Breast epithelium (tissue), 4 donors: ENCODE measurements at regions of chr3 and their contacts with region 1.

Region 1: DNA sequence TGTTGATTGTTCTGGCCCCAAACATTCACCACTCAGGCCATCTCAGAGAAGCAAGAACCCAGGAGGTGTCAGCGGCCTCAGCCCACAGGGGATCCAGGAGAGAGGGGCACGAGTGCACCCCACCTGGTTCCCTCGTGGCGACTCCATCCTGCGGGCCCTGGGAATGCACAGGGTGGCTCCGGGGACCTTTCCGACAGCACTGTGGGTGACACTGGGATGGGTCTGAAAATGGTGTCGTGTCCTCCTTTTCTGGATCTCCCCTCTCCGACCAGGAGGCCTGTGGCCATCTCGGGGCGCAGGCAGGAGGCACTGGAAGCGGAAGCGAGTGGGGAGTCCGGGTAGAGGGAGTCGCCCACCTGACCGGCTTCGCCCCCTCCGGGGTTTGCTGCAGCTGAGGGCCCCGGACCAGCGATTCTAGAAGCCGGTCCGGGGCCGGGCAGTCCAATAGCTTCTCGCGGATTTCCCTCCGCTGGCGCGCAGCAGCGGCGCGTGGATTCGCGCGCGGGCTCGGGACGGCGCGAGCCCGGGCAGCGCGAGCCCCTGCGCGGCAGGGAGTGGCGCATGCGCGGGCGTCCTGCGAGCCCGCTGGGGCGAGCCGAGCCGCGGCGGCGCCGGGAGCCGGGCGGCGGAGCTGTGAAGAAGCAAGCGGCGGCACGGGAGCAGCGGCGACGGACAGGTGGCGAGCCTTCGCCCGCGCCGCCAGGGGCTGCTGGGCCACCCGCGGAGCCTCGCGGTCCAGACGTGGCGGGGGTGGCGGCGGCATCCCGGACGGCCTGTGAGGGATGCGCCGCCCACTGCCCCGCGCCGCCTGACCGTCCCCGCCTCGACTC is at the start of gene DOCK3:
- DNase-seq: peak; percentile 23 to 58
- H3K4me3 ChIP-seq: peak within 1 kb of the TSS; percentile 33 to 74 (median 50)
- H3K27ac ChIP-seq: no peak within 1 kb of the TSS
- H3K4me1 ChIP-seq: peaks cover 0 to 5% of the 10 kb centered on the region in 2 donors
- H3K27me3 ChIP-seq: peaks cover 3 to 41% of the 10 kb centered on the region in 2 donors
- CTCF ChIP-seq: no peak
- POLR2A ChIP-seq: no peak
- total RNA-seq, gene DOCK3: 0.64 to 0.73 (median 0.66) TPM

Region 2: DNA sequence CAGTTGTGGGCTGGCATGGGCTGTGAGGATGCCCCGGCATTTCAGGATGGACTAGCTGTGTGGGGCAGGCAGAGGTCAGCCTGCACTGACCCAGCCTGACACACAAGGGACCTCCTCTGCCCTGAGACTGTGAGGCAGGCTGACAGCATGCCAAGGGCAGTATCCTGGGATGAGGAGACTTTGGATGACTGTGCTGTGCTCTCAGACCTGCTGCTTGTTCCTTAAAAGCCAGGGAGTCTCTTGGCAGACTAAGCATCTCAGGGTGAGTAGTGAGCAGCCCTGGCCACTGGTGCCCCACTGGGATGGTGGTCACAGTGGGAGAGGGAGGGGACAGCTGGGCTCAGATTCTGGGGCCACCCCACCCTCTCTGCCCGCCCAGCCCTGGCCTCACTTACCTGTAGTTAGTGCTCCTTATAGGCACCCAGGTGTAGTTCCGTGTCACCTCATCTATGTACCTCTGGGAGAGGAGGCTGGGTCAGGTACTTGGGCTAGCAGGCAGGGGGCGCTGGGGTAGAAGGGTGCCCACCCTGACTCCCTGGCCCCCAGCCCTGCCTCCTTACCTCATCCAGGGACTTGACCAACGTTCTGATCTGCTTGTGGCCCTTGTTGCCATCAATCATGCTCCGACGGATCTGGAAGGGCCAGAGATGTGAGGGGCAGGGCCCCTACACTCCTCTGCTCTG is 299.2 kb before region 1 on chr3:
- intact Hi-C with region 1: loop called (anchors 5 kb)
- DNase-seq: no peak
- H3K4me3 ChIP-seq: no peak overlapping the region
- H3K27ac ChIP-seq: no peak overlapping the region
- H3K4me1 ChIP-seq: no peaks in the 10 kb centered on the region
- H3K27me3 ChIP-seq: no peaks in the 10 kb centered on the region
- CTCF ChIP-seq: no peak
- POLR2A ChIP-seq: no peak

Region 3: GRCh38 chr3:50655009-50655830 is 19.3 kb before region 1 on chr3:
- intact Hi-C with region 1: loop called (anchors 2 kb)
- DNase-seq: no peak
- H3K4me3 ChIP-seq: no peak overlapping the region
- H3K27ac ChIP-seq: no peak overlapping the region
- H3K4me1 ChIP-seq: no peaks in the 10 kb centered on the region
- H3K27me3 ChIP-seq: no peaks in the 10 kb centered on the region
- CTCF ChIP-seq: no peak
- POLR2A ChIP-seq: no peak

Region 4: GRCh38 chr3:52216585-52217408 is 1542.2 kb after region 1 on chr3:
- intact Hi-C with region 1: no loop called
- DNase-seq: peak; percentile 86 to 90
- H3K4me3 ChIP-seq: peak overlapping the region in 1 of 3 donors; percentile 13
- H3K27ac ChIP-seq: peak overlapping the region; percentile 80 to 95
- H3K4me1 ChIP-seq: peaks cover 3 to 26% of the 10 kb centered on the region in 2 donors
- H3K27me3 ChIP-seq: no peaks in the 10 kb centered on the region
- CTCF ChIP-seq: no peak
- POLR2A ChIP-seq: no peak